ENCODE measurements at regions of chr2 and their contacts with region 1.

Region 1: GRCh38 chr2:62774555-62775366 is 69.2 kb downstream of the EHBP1 start:
- DNase-seq: no peak
- ATAC-seq: no peak
- H3K4me3 Mint-ChIP-seq: no peak overlapping the region
- H3K27ac Mint-ChIP-seq: no peak overlapping the region
- H3K4me1 Mint-ChIP-seq: no peaks in the 10 kb centered on the region
- H3K27me3 Mint-ChIP-seq: no peaks in the 10 kb centered on the region

Region 2: DNA sequence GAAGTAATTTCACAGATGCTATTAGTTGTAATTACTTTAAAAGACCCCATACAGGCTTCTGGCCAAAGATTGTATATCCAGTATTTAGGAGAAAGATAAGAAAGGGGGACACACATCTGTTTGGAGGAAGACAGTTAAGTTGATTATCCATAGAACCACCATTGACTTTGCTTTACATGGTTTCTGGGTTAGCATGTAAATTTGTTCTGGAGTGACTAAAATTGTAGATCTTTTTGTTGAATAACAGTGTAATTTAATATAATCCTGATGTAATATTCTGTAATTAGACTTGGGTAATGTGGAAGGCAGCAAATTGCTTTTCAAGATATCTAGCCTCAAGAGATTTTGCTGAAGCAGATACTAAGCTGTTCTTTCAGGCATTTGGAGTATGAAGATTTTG is 852.0 kb before region 1 on chr2:
- CTCF ChIA-PET with region 1: no interaction called
- POLR2A ChIA-PET with region 1: no interaction called
- intact Hi-C with region 1: loop called in 1 of 2 experiments (anchors 1 kb)
- DNase-seq: no peak
- ATAC-seq: no peak
- H3K4me3 Mint-ChIP-seq: no peak overlapping the region
- H3K27ac Mint-ChIP-seq: no peak overlapping the region
- H3K4me1 Mint-ChIP-seq: no peaks in the 10 kb centered on the region
- H3K27me3 Mint-ChIP-seq: no peaks in the 10 kb centered on the region

Region 3: GRCh38 chr2:63849381-63850203 is 1074.8 kb after region 1 on chr2:
- CTCF ChIA-PET with region 1: no interaction called
- POLR2A ChIA-PET with region 1: no interaction called
- intact Hi-C with region 1: no loop called
- DNase-seq: no peak
- ATAC-seq: no peak
- H3K4me3 Mint-ChIP-seq: no peak overlapping the region
- H3K27ac Mint-ChIP-seq: no peak overlapping the region
- H3K4me1 Mint-ChIP-seq: peaks cover 63% of the 10 kb centered on the region
- H3K27me3 Mint-ChIP-seq: no peaks in the 10 kb centered on the region

Measured in activated CD4-positive, alpha-beta T cell treated with anti-CD3 and anti-CD28 coated beads for 36 hours (primary cell).